ENCODE measurements at regions of chr17 and their contacts with region 1.

Region 1: GRCh38 chr17:16915752-16916556 is 56.0 kb downstream of the TNFRSF13B start:
- DNase-seq: peak; percentile 66 to 85 (median 77)
- ATAC-seq: peak; percentile 62
- H3K4me3 ChIP-seq: no peak overlapping the region
- H3K27ac ChIP-seq: no peak overlapping the region
- H3K4me1 ChIP-seq: no peaks in the 10 kb centered on the region
- H3K27me3 ChIP-seq: no peaks in the 10 kb centered on the region
- CTCF ChIP-seq: peak; percentile 20 to 53 (median 40)
- POLR2A ChIP-seq: no peak

Region 2: DNA sequence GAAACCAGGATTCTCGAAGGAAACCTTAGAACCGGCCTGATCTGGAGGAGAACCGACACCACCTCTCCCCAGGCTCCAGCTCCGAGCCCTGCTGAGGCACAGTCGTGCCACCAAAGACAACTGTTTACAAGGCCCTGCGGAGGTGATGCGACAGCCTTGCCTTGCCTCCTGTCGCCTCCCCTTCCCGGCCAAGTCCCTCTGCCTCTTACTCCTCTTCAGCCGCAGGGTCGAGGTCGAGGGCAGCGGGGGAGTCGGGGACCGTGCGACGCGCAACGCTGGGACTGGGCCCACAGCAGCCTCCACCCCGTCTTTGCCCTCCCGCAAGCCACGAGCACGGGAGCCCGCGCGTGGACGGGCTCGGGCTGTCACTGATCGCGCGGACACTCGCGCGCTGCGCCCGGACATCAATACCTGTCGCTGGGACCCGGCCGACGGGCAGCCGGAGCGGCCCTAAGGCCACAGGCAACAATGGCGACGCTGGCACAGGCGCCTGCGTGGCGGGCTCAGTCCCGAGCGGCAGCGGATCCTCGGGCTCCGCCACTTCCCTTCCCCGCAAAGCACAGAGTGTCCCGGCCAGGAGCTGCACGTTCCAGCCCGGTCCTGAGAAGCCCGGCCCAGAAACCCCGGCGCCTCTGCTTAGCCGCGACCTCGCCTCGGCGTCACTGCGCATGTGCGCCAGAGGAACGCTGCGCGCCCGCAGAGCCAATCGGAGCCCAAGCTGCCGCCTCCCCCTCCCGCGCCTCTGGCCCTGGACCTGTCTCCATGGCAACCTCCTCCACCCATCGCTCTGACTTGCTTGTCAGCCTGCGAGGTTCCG is 347.2 kb before region 1 on chr17 and contains the start of gene ZNF287:
- intact Hi-C with region 1: no loop called
- DNase-seq: peak; percentile 94 to 97 (median 96)
- ATAC-seq: peak; percentile 99
- H3K4me3 ChIP-seq: peak within 1 kb of the TSS; percentile 45 to 56
- H3K27ac ChIP-seq: peak within 1 kb of the TSS in 1 of 4 donors; percentile 21
- H3K4me1 ChIP-seq: peaks cover 8% of the 10 kb centered on the region
- H3K27me3 ChIP-seq: no peaks in the 10 kb centered on the region
- CTCF ChIP-seq: no peak
- POLR2A ChIP-seq: peak in 2 of 3 donors; percentile 63
- total RNA-seq, gene ZNF287: 4.4 to 7.6 TPM

Region 3: GRCh38 chr17:16853661-16854320 is 62.2 kb before region 1 on chr17:
- intact Hi-C with region 1: no loop called
- DNase-seq: no peak
- ATAC-seq: no peak
- H3K4me3 ChIP-seq: no peak overlapping the region
- H3K27ac ChIP-seq: no peak overlapping the region
- H3K4me1 ChIP-seq: no peaks in the 10 kb centered on the region
- H3K27me3 ChIP-seq: no peaks in the 10 kb centered on the region
- CTCF ChIP-seq: no peak
- POLR2A ChIP-seq: no peak

Region 4: DNA sequence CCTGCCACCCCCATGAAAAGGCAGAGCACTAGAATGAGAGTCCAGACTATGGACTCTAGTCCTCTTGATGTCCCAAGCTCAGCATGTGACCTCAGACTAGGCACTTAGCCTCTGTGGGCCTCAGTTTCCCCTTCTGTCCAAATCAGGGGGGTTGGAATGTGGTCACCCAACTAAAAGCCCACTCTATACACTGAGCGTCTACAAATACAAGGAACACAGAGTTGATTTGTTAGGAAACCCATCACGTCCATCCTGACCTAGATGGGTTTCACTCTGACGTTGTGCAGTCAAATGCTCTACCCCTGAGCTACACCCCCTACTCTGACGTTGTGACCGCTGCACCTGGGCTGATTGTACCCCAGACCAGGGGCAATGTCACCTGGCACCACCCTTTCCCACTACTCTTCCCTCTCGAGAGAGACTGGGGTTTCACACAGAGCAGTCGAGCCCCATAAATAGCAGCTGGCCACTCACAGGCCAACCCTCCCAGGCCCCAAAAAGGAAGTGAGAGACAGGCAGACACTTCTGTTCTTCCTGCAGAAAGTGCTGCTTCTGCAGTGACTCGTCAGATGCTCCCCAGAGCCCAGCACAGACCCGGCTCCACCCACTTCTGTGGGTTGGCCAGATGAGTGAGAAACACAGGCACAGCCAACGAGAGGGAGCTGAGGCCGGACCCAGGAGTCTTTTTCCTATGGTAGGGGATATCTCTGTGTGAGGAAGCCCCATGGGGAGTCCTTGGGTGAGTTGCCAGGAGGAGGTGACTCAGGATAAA is 72.1 kb after region 1 on chr17:
- intact Hi-C with region 1: loop called (anchors 5 kb)
- DNase-seq: peak in 2 of 4 donors; percentile 39 to 77
- ATAC-seq: no peak
- H3K4me3 ChIP-seq: no peak overlapping the region
- H3K27ac ChIP-seq: peak overlapping the region in 1 of 4 donors; percentile 31
- H3K4me1 ChIP-seq: no peaks in the 10 kb centered on the region
- H3K27me3 ChIP-seq: no peaks in the 10 kb centered on the region
- CTCF ChIP-seq: no peak
- POLR2A ChIP-seq: peak in 1 of 3 donors; percentile 30